Ovary (tissue), 10 donors: ENCODE measurements at regions of chr9 and their contacts with region 1.

Region 1: GRCh38 chr9:5450359-5451091 is at the start of gene CD274:
- DNase-seq: peak; percentile 83 to 91 (median 85)
- H3K4me3 ChIP-seq: peak within 1 kb of the TSS; percentile 36
- H3K27ac ChIP-seq: peak within 1 kb of the TSS; percentile 23 to 68
- H3K4me1 ChIP-seq: no peaks in the 10 kb centered on the region
- H3K27me3 ChIP-seq: no peaks in the 10 kb centered on the region
- CTCF ChIP-seq: peak; percentile 38 to 78 (median 50)
- EP300 ChIP-seq: no peak
- POLR2A ChIP-seq: peak; percentile 34
- total RNA-seq, gene CD274: 0.89 to 2.0 (median 1.5) TPM

Region 2: GRCh38 chr9:4769321-4770080 is 681.0 kb before region 1 on chr9:
- intact Hi-C with region 1: no loop called
- DNase-seq: no peak
- H3K4me3 ChIP-seq: no peak overlapping the region
- H3K27ac ChIP-seq: no peak overlapping the region
- H3K4me1 ChIP-seq: no peaks in the 10 kb centered on the region
- H3K27me3 ChIP-seq: no peaks in the 10 kb centered on the region
- CTCF ChIP-seq: no peak
- EP300 ChIP-seq: no peak
- POLR2A ChIP-seq: no peak

Region 3: GRCh38 chr9:5389109-5389732 is 61.3 kb before region 1 on chr9:
- intact Hi-C with region 1: no loop called
- DNase-seq: no peak
- H3K4me3 ChIP-seq: no peak overlapping the region
- H3K27ac ChIP-seq: no peak overlapping the region
- H3K4me1 ChIP-seq: no peaks in the 10 kb centered on the region
- H3K27me3 ChIP-seq: no peaks in the 10 kb centered on the region
- CTCF ChIP-seq: no peak
- EP300 ChIP-seq: no peak
- POLR2A ChIP-seq: no peak

Region 4: GRCh38 chr9:5510360-5510931 is 59.9 kb after region 1 on chr9 and contains the start of gene PDCD1LG2:
- intact Hi-C with region 1: loop called in 1 of 4 experiments (anchors 10 kb)
- DNase-seq: no peak
- H3K4me3 ChIP-seq: peak within 1 kb of the TSS; percentile 13
- H3K27ac ChIP-seq: peak within 1 kb of the TSS; percentile 9 to 52
- H3K4me1 ChIP-seq: peaks cover 2% of the 10 kb centered on the region
- H3K27me3 ChIP-seq: no peaks in the 10 kb centered on the region
- CTCF ChIP-seq: no peak
- EP300 ChIP-seq: no peak
- POLR2A ChIP-seq: no peak
- total RNA-seq, gene PDCD1LG2: 0.51 to 2.0 (median 1.2) TPM

Region 5: GRCh38 chr9:5593904-5594303 is 143.4 kb after region 1 on chr9:
- intact Hi-C with region 1: loop called in 2 of 4 experiments (anchors 5 to 10 kb)
- DNase-seq: no peak
- H3K4me3 ChIP-seq: no peak overlapping the region
- H3K27ac ChIP-seq: no peak overlapping the region
- H3K4me1 ChIP-seq: no peaks in the 10 kb centered on the region
- H3K27me3 ChIP-seq: no peaks in the 10 kb centered on the region
- CTCF ChIP-seq: no peak
- EP300 ChIP-seq: no peak
- POLR2A ChIP-seq: no peak

Region 6: DNA sequence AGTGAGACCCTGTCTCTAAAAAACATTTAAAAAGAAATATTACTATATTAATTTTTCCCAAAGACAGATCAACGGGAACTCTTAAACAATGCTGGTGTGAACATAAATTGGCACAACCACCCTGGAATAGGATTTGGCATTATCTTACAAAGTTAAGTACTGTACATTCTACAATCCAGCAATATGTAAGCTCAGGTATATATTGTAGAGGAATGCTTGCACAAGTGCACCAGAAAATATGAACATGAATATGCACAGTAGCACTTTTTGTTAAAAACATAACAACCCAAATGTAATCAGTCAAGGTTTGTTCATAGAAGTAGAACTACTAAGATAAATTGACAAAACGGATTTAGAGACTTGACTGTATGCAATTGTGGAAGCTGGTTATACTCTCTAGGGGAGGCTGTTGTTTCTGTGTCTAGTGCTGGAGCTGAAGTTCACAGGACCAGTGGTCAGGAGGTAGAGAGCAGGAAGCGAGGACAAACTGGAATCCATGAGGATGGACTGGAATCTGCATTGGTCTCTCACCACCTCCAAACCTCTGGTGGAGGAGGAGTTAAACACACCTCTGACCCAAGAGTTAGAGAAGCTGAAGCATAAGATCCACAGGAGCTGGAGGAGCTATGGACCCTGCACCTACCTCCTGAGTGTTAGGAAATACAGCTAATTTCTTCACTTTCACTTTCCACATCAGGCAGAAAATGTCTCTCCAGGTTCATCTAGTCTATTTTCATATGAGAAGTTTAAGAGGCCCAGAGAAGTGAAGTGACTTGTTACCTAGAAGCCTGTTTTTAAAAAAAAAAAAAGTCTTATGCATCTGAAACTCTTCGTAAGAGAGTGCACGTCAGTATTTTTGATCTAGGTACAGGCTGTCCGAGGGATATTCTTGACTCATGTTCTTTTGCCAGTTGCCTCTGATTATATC is 158.0 kb after region 1 on chr9:
- intact Hi-C with region 1: loop called in 1 of 4 experiments (anchors 10 kb)
- DNase-seq: no peak
- H3K4me3 ChIP-seq: peak overlapping the region; percentile 26
- H3K27ac ChIP-seq: no peak overlapping the region
- H3K4me1 ChIP-seq: no peaks in the 10 kb centered on the region
- H3K27me3 ChIP-seq: no peaks in the 10 kb centered on the region
- CTCF ChIP-seq: no peak
- EP300 ChIP-seq: no peak
- POLR2A ChIP-seq: no peak